Left colon (tissue), 2 donors: ENCODE measurements at regions of chr20 and their contacts with region 1.

Region 1: GRCh38 chr20:8722276-8722928 is 346.5 kb upstream of the PLCB4 start:
- DNase-seq: no peak
- ATAC-seq: peak; percentile 76

Region 2: GRCh38 chr20:7272512-7272911 is 1449.9 kb before region 1 on chr20:
- intact Hi-C with region 1: no loop called
- DNase-seq: no peak
- ATAC-seq: no peak

Region 3: DNA sequence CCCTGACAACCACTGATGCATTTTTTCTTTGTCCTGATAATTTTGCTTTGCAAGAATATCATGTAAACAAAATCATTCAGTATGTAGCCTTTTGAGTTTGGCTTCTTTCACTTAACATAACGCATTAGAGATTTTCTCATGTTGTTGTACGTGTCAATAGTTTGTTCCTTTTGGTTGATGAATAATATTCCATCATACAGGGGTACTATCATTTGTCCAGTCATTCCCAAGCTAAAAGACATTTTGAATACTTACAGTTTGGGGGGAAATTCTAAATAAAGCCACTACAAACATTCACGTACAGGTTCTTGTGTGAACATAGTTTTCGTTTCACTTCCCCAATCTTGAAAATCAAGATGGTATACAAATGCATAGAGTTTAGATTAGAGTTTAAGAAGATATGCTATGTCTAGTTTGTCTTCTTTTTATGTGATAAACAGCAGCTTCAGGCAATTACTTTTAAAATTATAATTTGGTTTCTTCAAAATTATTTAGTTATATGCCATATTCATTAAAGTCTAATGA is 787.3 kb before region 1 on chr20:
- intact Hi-C with region 1: loop called in 1 of 2 experiments (anchors 10 kb)
- DNase-seq: no peak
- ATAC-seq: no peak

Region 4: DNA sequence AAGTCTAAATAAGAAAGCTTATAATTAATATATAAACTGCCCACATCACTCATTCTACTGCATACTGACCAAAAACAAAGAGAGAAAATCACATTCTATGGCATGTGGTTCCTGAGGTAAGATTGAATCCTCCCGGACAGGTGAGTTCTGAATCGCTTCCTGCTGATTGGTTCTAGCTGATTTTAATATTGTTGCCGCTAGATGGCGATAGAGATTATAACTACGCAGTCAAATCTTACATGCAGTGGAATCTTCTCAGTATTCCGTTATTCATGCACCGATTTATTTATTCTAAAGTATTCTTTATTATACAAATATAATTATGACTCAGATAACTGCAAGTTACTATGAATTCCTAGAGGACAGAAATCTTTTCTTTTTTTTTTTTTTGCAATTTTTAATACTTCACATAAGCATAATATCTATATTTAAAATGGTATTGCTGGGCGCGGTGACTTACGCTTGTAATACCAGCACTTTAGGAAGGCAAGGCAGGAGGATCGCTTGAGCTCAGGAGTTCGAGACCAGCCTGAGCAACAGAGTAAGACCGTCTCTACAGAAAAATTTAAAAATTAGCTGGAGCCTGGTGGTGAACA is 678.6 kb before region 1 on chr20:
- intact Hi-C with region 1: loop called in 1 of 2 experiments (anchors 5 kb)
- DNase-seq: no peak
- ATAC-seq: peak; percentile 78

Region 5: GRCh38 chr20:8131598-8132483 is 590.6 kb before region 1 on chr20 and contains the start of gene PLCB1:
- intact Hi-C with region 1: loop called in 1 of 2 experiments (anchors 5 kb)
- DNase-seq: peak; percentile 65 to 75
- ATAC-seq: peak; percentile 91
- total RNA-seq, gene PLCB1: 8.5 to 10.9 TPM

Region 6: DNA sequence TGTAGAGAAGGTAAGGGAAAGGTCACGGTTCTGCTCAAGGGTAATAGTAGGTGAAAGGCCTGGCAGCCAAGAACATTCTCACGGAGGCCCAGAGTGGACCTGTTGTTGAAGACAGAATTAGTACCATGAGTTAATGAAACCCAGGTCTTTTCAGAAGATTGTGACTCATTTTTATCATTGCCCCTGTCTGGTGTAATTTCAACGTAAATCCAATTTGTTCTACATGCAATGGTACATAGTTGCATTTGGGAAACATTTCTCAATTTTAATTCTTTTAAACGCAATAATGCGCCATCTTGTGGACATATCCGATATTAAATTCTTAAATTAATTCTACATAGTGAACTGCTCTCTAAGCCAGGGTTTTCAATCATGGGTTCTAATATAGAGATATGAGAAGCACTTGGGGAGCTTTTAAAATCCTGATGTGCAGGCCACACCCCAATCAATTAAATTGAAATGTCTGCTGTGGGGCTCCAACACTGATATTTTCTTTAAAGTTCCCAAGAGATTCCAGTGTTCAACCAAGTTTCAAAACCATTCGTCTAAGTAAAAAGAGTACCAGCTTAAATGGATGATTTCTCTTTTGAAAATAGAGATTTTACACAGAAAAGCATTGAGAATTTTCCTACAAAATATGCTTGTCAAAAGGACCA is 332.9 kb before region 1 on chr20:
- intact Hi-C with region 1: loop called in 1 of 2 experiments (anchors 10 kb)
- DNase-seq: no peak
- ATAC-seq: no peak

Region 7: GRCh38 chr20:8790442-8791074 is 68.2 kb after region 1 on chr20:
- intact Hi-C with region 1: no loop called
- DNase-seq: peak in 1 of 2 donors; percentile 35
- ATAC-seq: no peak